H1 (cell line): ENCODE measurements at regions of chr4 and their contacts with region 1.

Region 1: DNA sequence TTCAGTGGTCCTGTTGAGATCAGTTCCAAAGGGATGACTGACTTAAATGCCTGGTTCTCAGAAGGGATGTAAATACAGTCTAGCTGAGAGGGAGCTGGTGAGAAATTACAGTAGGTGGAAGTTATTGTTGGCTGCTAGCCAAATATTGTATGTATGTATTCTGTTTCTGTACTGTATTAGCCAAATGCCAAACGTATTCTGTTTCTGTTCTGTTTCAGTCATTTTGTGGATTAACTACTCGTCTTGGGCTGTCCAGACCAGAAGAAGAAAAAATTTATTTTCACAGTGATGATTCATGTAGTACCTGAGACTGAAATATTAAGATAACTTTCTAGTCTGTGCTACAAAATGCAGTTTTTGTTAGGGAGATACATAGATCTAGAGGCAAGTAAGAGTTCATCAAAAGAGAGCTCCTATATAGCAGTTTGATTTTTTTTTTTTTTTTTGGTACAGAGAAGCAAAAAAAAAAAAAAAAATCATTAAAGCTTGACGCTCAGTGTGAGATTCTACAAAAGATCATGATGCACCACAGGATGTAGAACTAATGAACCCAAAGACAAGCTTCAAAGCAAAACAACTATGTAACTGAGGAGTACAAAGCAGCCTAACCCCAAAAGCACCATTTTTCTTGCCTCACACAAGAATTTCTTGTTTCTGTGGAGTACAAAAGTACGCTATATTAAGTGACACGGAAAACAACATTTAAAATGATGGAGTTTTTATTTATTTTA is 54.8 kb downstream of the CASP6 start:
- DNase-seq: no peak
- H3K4me3 ChIP-seq: no peak overlapping the region
- H3K27ac ChIP-seq: no peak overlapping the region
- H3K4me1 ChIP-seq: 0 out of 7 replicates have a peak, but pooled peaks cover 0 to 3% (median 0%) of the 10 kb centered on the region in 4 experiments
- H3K27me3 ChIP-seq: no peaks in the 10 kb centered on the region
- CTCF ChIP-seq: no peak
- EP300 ChIP-seq: no peak
- POLR2A ChIP-seq: no peak
- RAD21 ChIP-seq: no peak

Region 2: GRCh38 chr4:109662786-109663185 is 14.4 kb after region 1 on chr4:
- CTCF ChIA-PET with region 1: interaction called, 17 read pairs
- POLR2A ChIA-PET with region 1: no interaction called
- DNase-seq: no peak
- H3K4me3 ChIP-seq: no peak overlapping the region
- H3K27ac ChIP-seq: no peak overlapping the region
- H3K4me1 ChIP-seq: peaks cover 0 to 10% (median 2%) of the 10 kb centered on the region in 4 experiments; a peak in 4 of 7 replicates
- H3K27me3 ChIP-seq: no peaks in the 10 kb centered on the region
- CTCF ChIP-seq: no peak
- EP300 ChIP-seq: no peak
- POLR2A ChIP-seq: no peak
- RAD21 ChIP-seq: no peak